Calu3 (cell line): ENCODE measurements at regions of chr2 and their contacts with region 1.

Region 1: DNA sequence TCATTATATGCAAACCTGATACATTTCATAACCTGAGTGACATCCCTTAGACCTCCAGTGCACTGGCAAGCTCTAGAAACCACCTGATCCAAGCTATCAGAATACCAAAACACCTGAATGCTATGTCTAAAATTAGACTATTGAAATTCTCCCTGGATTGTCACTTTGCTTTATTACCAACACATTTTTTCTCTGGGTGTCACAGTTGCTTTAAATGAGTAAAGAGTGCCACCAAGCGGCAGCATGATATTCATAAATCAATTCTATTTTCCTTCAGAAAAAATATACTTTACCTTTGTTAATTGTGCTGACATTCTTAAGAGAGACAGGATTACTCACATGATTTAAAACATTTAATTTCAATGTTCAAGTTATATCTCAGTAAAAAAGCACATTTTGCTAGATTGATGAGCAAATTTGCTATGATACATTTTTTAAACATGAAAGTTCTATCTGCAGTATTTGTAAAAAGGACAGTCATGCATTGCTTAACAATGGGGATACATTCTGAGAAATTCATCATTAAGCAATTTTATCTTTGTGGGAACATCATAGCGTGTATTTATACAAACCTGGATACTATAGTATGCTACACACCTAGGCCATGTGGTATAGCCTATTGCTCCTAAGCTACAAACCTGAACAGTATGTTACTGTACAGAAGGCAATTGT is 338.4 kb upstream of the SLC39A10 start:
- DNase-seq: peak; percentile 41
- H3K4me3 Mint-ChIP-seq: no peak overlapping the region
- H3K27ac Mint-ChIP-seq: peak overlapping the region; percentile 77
- H3K4me1 Mint-ChIP-seq: peaks cover 20% of the 10 kb centered on the region
- H3K27me3 Mint-ChIP-seq: no peaks in the 10 kb centered on the region
- CTCF ChIP-seq: peak; percentile 54

Region 2: DNA sequence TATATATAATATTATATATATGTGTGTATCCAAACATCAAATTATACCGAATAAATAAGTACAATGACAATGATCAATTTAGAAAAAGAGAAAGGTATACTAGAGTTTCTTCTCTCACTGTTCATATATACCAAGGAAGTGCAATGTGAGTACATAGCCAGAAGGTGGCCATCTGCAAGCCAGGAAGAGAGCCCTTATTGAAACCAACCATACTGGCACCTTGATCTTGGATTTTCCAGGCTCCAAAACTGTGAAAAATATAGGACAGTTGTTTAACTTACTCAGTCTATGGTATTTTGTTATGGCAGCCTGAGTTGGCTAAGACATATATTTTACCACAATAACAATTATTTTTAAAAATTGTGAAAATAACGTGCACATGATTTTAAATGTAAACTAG is 1151.8 kb before region 1 on chr2:
- CTCF ChIA-PET with region 1: no interaction called
- intact Hi-C with region 1: loop called (anchors 1 kb)
- DNase-seq: peak; percentile 23
- H3K4me3 Mint-ChIP-seq: no peak overlapping the region
- H3K27ac Mint-ChIP-seq: no peak overlapping the region
- H3K4me1 Mint-ChIP-seq: no peaks in the 10 kb centered on the region
- H3K27me3 Mint-ChIP-seq: no peaks in the 10 kb centered on the region
- CTCF ChIP-seq: peak; percentile 58

Region 3: DNA sequence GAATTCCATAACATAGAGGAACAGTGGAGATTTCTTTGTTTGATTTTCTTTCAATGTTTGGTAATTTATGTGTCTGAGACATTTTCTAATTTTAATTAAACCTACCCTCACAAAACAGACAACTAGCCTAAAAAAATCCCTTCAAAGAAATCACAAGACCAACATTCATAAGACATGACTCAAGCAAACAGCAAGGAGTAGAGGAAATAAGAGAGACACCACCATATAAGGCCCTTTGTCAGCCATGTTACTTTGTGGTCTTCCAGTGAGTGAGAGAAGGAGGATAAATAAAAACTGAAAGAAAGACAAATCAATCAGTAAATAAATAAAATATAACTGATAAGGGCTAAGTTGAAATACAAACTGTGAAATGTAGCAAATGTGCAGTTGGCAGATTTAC is 492.3 kb before region 1 on chr2:
- CTCF ChIA-PET with region 1: no interaction called
- intact Hi-C with region 1: loop called (anchors 5 kb)
- DNase-seq: no peak
- H3K4me3 Mint-ChIP-seq: no peak overlapping the region
- H3K27ac Mint-ChIP-seq: peak overlapping the region; percentile 56
- H3K4me1 Mint-ChIP-seq: peaks cover 16% of the 10 kb centered on the region
- H3K27me3 Mint-ChIP-seq: no peaks in the 10 kb centered on the region
- CTCF ChIP-seq: no peak

Region 4: GRCh38 chr2:195181059-195181705 is 137.4 kb before region 1 on chr2:
- CTCF ChIA-PET with region 1: no interaction called
- intact Hi-C with region 1: no loop called
- DNase-seq: no peak
- H3K4me3 Mint-ChIP-seq: no peak overlapping the region
- H3K27ac Mint-ChIP-seq: no peak overlapping the region
- H3K4me1 Mint-ChIP-seq: peaks cover 7% of the 10 kb centered on the region
- H3K27me3 Mint-ChIP-seq: no peaks in the 10 kb centered on the region
- CTCF ChIP-seq: no peak

Region 5: DNA sequence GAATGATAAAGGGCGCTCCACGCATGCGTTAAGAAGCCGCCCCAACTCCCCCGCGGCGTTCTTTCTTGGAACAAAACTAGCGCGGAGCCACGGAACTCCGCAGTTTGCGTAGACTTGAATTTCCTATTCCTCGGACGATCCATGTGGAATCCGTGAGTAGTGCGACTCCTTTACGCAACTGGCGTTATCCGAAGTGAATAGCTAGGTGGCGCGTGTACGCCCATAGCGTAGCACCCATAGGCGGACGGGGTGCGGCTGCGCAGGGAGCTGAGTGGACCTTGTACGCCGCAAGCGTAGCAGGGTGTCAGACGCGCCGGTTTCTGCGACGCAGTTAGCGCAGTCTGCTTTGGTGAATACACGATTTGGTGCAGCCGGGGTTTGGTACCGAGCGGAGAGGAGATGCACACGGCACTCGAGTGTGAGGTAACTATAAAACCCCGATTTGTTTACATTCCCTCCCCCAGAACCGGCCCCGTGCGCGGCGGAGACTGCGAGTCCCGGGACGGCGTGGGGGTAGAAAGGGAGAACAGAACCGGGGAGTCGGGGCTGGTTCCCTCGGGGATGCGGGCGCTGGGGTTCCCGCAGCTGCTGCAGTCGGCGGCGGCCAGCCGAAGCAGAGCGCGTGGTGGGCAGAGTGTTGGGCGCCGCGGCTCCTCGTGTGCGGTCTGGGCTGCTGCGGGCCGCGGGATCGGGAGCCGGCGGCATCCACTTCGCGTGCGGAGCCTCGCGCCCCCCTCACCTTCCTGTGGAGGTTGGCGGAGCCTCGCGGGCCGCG is 338.5 kb after region 1 on chr2 and contains the start of gene SLC39A10:
- CTCF ChIA-PET with region 1: interaction called, 4 read pairs
- intact Hi-C with region 1: loop called (anchors 1 kb)
- DNase-seq: peak; percentile 94
- H3K4me3 Mint-ChIP-seq: peak within 1 kb of the TSS; percentile 97
- H3K27ac Mint-ChIP-seq: peak within 1 kb of the TSS; percentile 99
- H3K4me1 Mint-ChIP-seq: peaks cover 28% of the 10 kb centered on the region
- H3K27me3 Mint-ChIP-seq: no peaks in the 10 kb centered on the region
- CTCF ChIP-seq: no peak
- total RNA-seq, gene SLC39A10: 49.0 and 133 TPM in 2 replicates

Region 6: GRCh38 chr2:196068271-196069209 is 750.0 kb after region 1 on chr2 and contains the start of gene DNAH7:
- CTCF ChIA-PET with region 1: no interaction called
- intact Hi-C with region 1: loop called (anchors 5 kb)
- DNase-seq: peak; percentile 90
- H3K4me3 Mint-ChIP-seq: peak within 1 kb of the TSS; percentile 87
- H3K27ac Mint-ChIP-seq: peak within 1 kb of the TSS; percentile 98
- H3K4me1 Mint-ChIP-seq: no peaks in the 10 kb centered on the region
- H3K27me3 Mint-ChIP-seq: no peaks in the 10 kb centered on the region
- CTCF ChIP-seq: peak; percentile 61
- total RNA-seq, gene DNAH7: 1.7 and 2.5 TPM in 2 replicates